GM13977 (cell line): ENCODE measurements at regions of chr18 and their contacts with region 1.

Region 1: DNA sequence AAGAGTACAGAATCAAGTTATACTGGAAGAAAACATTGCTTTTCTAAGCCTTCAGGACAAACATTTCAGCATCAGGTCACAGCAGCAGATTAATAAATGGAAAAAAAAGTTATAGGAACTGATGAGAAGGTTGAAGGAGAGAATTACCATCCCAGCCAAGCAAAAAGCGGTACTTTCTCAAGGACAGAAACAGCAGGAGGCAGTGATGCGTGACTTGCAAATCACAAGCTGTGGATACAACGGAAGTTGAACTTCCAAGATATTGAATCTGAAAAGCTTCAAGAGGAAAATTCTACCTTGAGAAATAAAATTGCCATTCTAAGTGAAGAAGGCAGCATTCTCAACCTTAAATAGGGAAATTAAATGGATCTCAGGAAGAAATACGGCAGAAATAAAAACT is 18.5 kb upstream of the SERPINB12 start:
- DNase-seq: no peak
- CTCF ChIP-seq: no peak

Region 2: GRCh38 chr18:63578357-63578958 is 54.8 kb after region 1 on chr18:
- in situ Hi-C with region 1: loop called (anchors 10 kb)
- DNase-seq: peak; percentile 28
- CTCF ChIP-seq: peak; percentile 79